HEK293 (cell line): ENCODE measurements at regions of chr19 and their contacts with region 1.

Region 1: DNA sequence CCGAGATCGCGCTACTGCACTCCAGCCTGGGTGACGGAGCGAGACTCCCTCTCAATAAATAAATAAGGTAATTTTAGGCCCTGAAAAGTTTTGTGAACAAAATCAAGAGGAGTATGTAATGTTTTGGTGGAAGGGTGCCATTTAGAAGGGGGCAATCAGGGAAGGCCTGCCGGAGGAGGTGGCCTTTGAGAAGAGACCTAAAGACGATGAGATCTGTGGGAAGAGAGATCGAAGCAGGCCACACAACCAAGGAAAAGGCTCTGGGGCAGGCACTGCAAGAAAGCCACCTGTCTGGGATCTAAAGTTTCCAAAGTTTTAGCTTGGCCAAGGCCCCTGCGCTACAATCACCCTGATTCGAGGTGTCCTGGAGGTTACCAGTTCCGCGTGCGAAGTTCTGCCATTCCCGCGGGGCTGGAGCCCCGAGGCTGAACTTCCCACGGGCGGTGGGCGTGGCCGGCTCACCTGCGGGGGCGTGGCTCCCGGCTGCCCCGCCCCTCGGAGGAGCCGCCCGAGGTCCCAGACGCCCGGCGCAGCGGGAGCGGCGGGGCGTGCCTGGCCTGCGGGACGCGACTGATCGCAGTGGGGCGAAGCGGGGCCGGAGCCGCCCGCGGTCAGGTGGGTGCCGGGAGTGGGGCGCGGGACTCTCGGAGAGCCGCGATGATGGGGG is at the start of gene KLC3:
- H3K4me3 ChIP-seq: peak within 1 kb of the TSS; percentile 52
- H3K27ac ChIP-seq: no peak within 1 kb of the TSS; the same call in 1 of the 2 replicates
- H3K4me1 ChIP-seq: no peaks in the 10 kb centered on the region
- CTCF ChIP-seq: no peak

Region 2: GRCh38 chr19:44903602-44904425 is 436.6 kb before region 1 on chr19:
- CTCF ChIA-PET with region 1: interaction called, 15 read pairs
- POLR2A ChIA-PET with region 1: no interaction called
- H3K4me3 ChIP-seq: no peak overlapping the region
- H3K27ac ChIP-seq: no peak overlapping the region
- H3K4me1 ChIP-seq: peaks cover 6% of the 10 kb centered on the region; the same call in 1 of the 2 replicates
- CTCF ChIP-seq: peak; percentile 88

Region 3: GRCh38 chr19:45059278-45059965 is 280.9 kb before region 1 on chr19:
- CTCF ChIA-PET with region 1: interaction called, 10 read pairs
- POLR2A ChIA-PET with region 1: interaction called, 3 read pairs
- H3K4me3 ChIP-seq: no peak overlapping the region
- H3K27ac ChIP-seq: no peak overlapping the region
- H3K4me1 ChIP-seq: no peaks in the 10 kb centered on the region
- CTCF ChIP-seq: peak; percentile 81; the same call in 1 of the 2 replicates

Region 4: GRCh38 chr19:45178262-45179071 is 161.9 kb before region 1 on chr19 and contains the start of gene BLOC1S3:
- CTCF ChIA-PET with region 1: interaction called, 11 read pairs
- POLR2A ChIA-PET with region 1: interaction called, 4 read pairs
- H3K4me3 ChIP-seq: peak within 1 kb of the TSS; percentile 83
- H3K27ac ChIP-seq: peak within 1 kb of the TSS; percentile 85
- H3K4me1 ChIP-seq: peaks cover 8% of the 10 kb centered on the region
- CTCF ChIP-seq: peak; percentile 97

Region 5: DNA sequence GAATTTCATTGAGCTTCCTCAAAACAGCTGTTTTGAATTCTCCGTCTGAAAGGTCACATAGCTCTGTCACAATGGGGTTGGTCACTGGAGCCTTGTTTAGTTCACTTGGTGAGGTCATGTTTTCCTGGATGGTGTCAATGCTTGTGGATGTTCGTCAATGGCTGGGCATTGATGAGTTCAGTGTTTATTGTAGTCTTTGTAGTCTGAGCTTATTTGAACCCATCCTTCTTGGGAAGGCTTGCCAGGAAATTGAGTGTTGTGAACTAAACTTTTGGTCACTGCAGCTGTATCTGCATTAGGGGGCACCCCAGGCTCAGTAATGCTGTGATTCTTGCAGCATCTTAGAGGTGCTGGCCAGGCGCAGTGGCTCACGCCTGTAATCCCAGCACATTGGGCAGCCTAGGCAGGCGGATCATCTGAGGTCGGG is 139.8 kb before region 1 on chr19:
- CTCF ChIA-PET with region 1: interaction called, 10 read pairs
- POLR2A ChIA-PET with region 1: no interaction called
- H3K4me3 ChIP-seq: no peak overlapping the region
- H3K27ac ChIP-seq: no peak overlapping the region
- H3K4me1 ChIP-seq: no peaks in the 10 kb centered on the region
- CTCF ChIP-seq: peak; percentile 82

Region 6: GRCh38 chr19:45223879-45224278 is 116.5 kb before region 1 on chr19:
- CTCF ChIA-PET with region 1: no interaction called
- POLR2A ChIA-PET with region 1: no interaction called
- H3K4me3 ChIP-seq: no peak overlapping the region
- H3K27ac ChIP-seq: no peak overlapping the region
- H3K4me1 ChIP-seq: no peaks in the 10 kb centered on the region
- CTCF ChIP-seq: no peak

Region 7: DNA sequence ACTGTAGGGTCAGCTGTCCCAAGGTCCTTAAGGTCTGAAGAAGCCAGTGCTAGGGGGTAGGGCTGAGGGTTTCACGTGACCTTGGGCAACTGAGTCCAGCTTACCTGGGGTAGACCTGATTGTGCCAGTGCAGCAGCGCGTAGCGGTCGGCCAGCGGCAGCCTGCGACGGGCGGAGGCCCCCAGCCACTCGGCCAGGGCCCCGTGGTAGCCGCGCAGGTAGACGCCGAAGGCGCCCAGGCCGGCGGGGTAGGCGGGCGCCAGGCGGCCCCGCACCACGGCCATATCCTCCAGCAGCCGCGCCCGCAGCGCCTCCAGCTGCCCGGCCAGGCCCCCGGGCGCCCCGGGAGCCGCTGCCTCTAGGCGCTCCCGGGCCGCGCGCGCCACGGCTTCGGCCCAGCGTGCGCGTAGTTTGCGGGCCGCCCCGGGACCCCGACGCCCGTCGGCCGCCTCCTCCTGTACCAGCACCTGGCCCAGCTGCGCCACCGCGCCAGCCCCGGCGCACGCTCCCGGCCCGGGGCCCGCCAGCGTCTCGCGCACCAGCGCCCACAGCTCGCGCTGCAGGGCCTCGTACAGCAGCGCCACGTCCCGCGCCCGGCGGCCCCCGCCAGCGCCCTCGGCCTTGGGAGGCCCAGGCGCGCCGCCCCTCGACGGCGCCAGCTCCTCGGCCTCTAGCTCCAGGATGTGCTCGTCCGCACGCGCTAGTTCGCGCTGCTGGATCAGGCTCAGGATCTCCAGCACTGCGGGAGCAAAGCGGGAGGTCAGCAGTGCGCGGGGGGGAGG is 106.1 kb before region 1 on chr19:
- CTCF ChIA-PET with region 1: no interaction called
- POLR2A ChIA-PET with region 1: no interaction called
- H3K4me3 ChIP-seq: no peak overlapping the region
- H3K27ac ChIP-seq: no peak overlapping the region
- H3K4me1 ChIP-seq: no peaks in the 10 kb centered on the region
- CTCF ChIP-seq: no peak

Region 8: GRCh38 chr19:45250832-45251451 is 89.4 kb before region 1 on chr19 and contains the start of gene MARK4:
- CTCF ChIA-PET with region 1: interaction called, 12 read pairs
- POLR2A ChIA-PET with region 1: interaction called, 3 read pairs
- H3K4me3 ChIP-seq: peak within 1 kb of the TSS; percentile 72
- H3K27ac ChIP-seq: peak within 1 kb of the TSS; percentile 79
- H3K4me1 ChIP-seq: peaks cover 3% of the 10 kb centered on the region; the same call in 1 of the 2 replicates
- CTCF ChIP-seq: no peak

Region 9: DNA sequence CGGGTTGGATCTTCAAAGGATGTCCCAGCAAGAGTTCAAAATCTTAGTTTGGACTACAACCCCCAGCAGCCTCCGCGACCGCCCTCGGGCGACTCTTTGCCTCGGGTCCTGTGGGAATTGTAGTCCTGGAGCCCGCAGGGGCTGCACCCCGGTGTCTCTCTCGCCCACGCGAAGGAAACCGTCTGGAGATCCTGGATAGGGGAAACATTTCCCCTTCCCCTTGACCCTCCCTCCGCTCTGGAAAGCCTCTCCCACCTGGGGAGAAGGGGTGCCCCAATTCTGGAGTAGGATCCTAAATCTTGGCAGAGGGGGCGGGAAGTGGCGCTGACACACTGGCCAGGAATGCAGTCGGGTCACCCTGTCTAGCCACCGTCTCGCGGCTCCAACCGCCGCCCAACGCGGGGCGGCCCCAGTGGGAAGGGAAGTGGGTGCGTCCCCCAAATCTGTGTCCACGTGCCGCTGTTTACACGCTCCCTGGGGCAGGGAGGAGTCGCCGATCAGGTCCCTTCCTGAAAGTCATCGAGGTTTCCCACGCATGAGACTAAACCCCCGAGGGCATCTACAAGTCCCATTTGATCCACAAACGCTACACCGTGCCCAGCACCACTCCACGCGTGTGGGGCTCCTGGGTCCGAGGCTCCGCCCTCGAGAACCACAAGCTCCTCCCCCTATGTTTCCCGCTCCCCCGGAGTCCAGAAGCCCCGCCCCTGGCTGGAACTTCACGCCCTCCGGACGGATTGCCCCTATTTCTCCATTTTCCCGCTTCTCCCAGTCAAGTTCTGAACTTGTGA is 65.3 kb after region 1 on chr19:
- CTCF ChIA-PET with region 1: interaction called, 12 read pairs
- POLR2A ChIA-PET with region 1: interaction called, 3 read pairs
- H3K4me3 ChIP-seq: peak overlapping the region; percentile 82
- H3K27ac ChIP-seq: peak overlapping the region; percentile 96
- H3K4me1 ChIP-seq: 0 out of 2 replicates have a peak, but pooled peaks cover 7% of the 10 kb centered on the region
- CTCF ChIP-seq: no peak